K562 (cell line): ENCODE measurements at regions of chr9 and their contacts with region 1.

Region 1: DNA sequence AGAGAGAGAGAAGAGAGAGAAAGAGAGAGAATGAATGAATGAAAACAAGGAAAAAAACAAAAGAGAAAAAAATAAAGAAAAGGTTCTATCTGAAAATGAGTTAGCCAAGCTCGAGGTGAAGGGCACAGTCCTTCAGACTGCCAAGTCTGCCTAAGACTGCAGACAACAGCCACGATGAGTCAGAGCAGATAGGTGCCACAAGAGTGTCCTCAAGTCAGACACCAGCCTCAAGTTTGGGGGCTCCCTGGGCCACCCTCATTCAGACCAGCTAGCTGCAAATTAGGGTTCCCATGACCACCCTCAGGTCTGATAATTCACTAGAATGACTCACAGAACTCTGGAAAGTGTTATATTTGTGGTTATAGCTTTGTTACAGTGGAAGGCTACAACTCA is 13.9 kb upstream of the HABP4 start:
- DNase-seq: no peak
- ATAC-seq: no peak
- H3K4me3 ChIP-seq: no peak overlapping the region
- H3K27ac ChIP-seq: no peak overlapping the region
- H3K4me1 ChIP-seq: no peaks in the 10 kb centered on the region; a peak in 1 of 5 replicates
- H3K27me3 ChIP-seq: no peaks in the 10 kb centered on the region
- CTCF ChIP-seq: no peak
- EP300 ChIP-seq: no peak
- POLR2A ChIP-seq: no peak
- RAD21 ChIP-seq: no peak

Region 2: DNA sequence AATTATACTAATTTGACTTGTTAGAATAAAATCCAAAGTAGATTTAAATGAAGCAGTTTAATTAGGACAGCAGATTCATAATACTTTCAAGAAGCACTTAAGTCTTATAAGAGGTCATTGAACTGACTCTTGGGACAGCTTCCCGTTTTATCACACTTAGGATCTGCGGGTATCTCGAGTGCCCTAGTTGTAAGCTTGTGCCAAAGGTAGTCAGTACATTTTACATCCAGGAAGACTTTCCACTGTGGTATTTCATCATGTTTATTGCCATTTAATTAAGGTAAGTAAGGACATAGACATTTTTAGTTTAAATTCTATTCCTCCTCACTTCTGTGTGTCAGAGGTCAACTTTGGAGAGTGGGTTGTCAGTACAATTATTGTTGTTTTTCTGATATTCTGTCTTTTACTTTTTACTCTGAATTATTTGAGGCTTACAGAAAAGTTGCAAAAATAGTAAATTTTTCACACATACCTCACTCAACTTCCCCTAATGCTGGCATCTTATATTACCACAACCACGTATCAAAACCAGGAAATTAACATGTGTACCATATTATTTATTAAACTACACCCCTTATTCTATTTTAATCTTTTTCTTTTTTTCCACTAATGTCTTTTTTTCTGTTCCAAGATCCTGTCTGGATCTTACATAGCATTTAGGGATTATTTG is 10.4 kb before region 1 on chr9:
- CTCF ChIA-PET with region 1: no interaction called
- POLR2A ChIA-PET with region 1: interaction called, 12 read pairs
- in situ Hi-C with region 1: no loop called
- intact Hi-C with region 1: no loop called
- DNase-seq: no peak
- ATAC-seq: no peak
- H3K4me3 ChIP-seq: no peak overlapping the region
- H3K27ac ChIP-seq: no peak overlapping the region
- H3K4me1 ChIP-seq: peaks cover 0 to 24% of the 10 kb centered on the region in 2 experiments; a peak in 3 of 5 replicates
- H3K27me3 ChIP-seq: no peaks in the 10 kb centered on the region
- CTCF ChIP-seq: no peak
- EP300 ChIP-seq: no peak
- POLR2A ChIP-seq: no peak
- RAD21 ChIP-seq: no peak